ENCODE measurements at regions of chr2 and their contacts with region 1.

Region 1: DNA sequence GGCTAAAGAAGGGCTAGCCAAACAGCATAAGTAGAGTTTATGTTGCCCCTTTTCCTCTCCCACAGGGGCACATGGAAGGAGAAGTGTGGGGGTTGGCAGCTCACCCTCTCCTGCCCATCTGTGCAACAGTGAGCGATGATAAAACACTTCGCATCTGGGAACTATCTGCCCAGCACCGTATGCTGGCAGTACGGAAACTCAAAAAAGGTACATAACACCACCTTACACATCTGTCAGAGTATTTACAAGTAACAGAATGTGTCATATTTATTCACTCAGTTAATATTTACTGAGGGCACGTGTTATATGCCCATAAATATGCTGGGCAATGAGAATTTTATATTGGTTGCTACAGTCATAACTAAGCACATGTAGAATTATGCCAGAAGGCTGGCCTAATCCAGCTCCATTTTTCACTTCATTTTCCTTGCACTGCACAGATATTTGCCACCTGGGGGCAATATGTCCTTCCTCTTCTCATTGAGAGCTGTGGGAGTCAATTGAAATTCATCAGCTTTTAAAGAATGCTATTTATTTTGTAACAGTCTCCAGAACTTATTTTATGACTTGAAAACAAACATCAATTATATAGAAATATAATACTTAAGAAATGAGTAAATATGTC is 150.6 kb downstream of the RTN4 start:
- DNase-seq: no peak
- ATAC-seq: peak; percentile 56 to 76
- H3K4me3 ChIP-seq: no peak overlapping the region
- H3K27ac ChIP-seq: no peak overlapping the region
- H3K4me1 ChIP-seq: no peaks in the 10 kb centered on the region
- H3K27me3 ChIP-seq: no peaks in the 10 kb centered on the region
- CTCF ChIP-seq: peak; percentile 62

Region 2: GRCh38 chr2:55175254-55176025 is 275.8 kb after region 1 on chr2:
- intact Hi-C with region 1: loop called (anchors 10 kb)
- DNase-seq: no peak
- ATAC-seq: peak; percentile 79 to 90
- H3K4me3 ChIP-seq: no peak overlapping the region
- H3K27ac ChIP-seq: no peak overlapping the region
- H3K4me1 ChIP-seq: peaks cover 7% of the 10 kb centered on the region
- H3K27me3 ChIP-seq: no peaks in the 10 kb centered on the region
- CTCF ChIP-seq: peak; percentile 69